AG04450 (cell line): ENCODE measurements at regions of chr7 and their contacts with region 1.

Region 1: DNA sequence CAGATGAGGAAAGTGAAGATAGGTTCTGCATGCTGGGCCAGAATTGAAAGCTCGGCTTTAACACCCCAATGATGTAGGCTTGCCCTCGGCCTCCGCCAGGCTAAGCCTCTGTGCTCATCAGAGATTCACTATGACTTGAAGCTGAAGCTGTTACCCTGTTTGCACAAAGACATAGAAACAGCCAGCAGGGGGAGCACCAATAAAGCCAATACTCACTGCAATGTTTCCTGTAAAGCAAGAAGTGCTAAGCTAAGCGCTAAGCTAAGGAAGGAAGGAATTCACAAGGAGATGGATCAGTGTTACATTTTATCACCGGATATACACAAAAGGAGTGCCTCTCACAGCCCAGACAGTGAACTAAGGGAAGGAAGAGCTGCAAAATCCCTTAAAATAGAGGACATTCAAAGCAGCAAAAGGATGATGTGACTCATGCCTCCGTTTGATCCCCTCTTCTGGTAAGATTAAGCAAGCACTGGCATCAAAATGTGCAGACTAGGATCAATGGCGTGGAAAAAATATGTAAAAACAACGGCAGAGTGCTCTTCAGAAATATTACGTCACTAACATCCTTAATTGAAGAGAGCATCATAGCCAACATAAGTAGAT is 153.8 kb downstream of the COBL start:
- DNase-seq: peak; percentile 26
- H3K4me3 ChIP-seq: no peak overlapping the region
- H3K27ac ChIP-seq: no peak overlapping the region
- H3K27me3 ChIP-seq: peaks cover 6% of the 10 kb centered on the region
- CTCF ChIP-seq: peak; percentile 93

Region 2: DNA sequence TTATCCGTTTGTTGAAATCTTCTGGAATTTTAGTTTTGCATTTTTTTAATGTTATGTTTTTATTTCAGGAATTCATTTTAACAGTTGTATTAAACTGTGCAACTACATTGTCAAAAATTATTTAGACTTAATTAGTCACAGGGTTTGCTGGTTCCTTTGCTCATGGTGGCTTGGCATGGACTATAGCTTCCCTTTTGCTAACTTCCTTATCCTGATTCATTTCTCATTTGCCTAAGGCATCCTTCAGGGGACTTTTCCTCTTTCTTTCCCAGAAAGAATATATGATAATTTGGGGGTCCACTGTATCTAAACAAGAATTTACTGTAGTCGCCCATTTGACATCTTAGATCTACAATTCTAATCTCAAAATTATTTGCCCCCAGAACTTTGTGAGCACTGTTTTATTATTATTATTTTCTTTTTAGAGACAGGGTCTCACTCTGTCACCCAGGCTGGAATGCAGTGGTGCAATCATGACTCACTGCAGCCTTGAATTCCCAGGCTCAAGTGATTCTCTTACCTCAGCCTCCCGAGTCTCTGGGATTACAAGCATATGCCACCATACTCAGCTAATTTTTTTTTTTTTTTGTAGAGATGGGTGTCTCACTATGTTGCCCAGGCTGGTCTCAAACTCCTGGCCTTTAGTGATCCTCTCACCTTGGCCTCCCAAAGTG is 726.6 kb before region 1 on chr7:
- CTCF ChIA-PET with region 1: interaction called, 12 read pairs
- POLR2A ChIA-PET with region 1: no interaction called
- DNase-seq: peak; percentile 27
- H3K4me3 ChIP-seq: no peak overlapping the region
- H3K27ac ChIP-seq: no peak overlapping the region
- H3K27me3 ChIP-seq: no peaks in the 10 kb centered on the region
- CTCF ChIP-seq: no peak

Region 3: GRCh38 chr7:50679218-50680007 is 483.4 kb before region 1 on chr7:
- CTCF ChIA-PET with region 1: interaction called, 12 read pairs
- POLR2A ChIA-PET with region 1: no interaction called
- DNase-seq: no peak
- H3K4me3 ChIP-seq: no peak overlapping the region
- H3K27ac ChIP-seq: no peak overlapping the region
- H3K27me3 ChIP-seq: no peaks in the 10 kb centered on the region
- CTCF ChIP-seq: peak; percentile 40

Region 4: DNA sequence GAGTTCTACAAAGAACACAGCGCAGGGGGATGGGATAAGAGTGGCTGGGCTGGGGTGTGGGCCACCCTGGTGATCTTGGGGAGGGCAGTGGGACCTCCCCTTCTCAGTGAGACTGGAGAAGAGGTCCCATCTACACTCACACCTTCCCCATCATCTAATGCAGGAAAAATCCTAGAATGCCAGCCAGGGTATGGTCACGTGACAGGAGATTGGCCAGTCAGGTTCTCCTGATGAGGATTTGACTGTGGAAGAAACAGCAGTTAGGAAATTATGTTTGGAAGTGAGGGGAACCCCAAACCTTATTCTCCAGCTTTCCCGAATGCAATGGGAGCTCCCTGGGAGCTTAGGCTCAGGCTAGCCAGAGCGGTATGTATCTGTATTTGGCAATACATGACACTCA is 221.3 kb before region 1 on chr7:
- CTCF ChIA-PET with region 1: no interaction called
- POLR2A ChIA-PET with region 1: no interaction called
- DNase-seq: no peak
- H3K4me3 ChIP-seq: no peak overlapping the region
- H3K27ac ChIP-seq: no peak overlapping the region
- H3K27me3 ChIP-seq: peaks cover 2% of the 10 kb centered on the region
- CTCF ChIP-seq: no peak

Region 5: DNA sequence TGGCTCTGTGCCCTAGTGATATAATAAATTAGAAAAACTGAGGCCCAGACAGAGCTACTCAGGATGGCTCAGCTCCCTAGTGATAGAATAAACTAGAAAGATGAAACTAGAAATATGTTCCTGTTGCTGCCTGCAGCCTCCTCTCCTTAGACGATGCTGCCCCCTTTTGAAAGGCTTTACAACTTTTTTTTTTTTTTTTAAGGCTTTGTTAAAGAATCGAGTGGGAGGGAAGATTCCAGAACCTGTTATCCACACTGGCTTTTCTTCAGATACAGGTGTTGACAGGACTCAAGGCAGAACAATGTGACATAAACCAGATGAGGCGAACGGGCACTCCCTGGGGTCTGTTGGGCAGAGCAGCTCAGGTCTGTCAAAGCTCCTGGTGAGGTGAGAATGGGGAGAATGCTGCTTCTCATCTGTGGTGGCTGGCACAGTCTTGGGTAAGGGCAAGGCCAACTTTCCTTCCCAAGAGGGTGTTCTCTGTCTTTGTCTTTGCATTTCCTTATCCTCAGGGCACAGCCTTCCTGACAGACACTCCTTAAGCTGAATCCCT is 21.3 kb before region 1 on chr7:
- CTCF ChIA-PET with region 1: interaction called, 61 read pairs
- POLR2A ChIA-PET with region 1: no interaction called
- DNase-seq: peak; percentile 1
- H3K4me3 ChIP-seq: no peak overlapping the region
- H3K27ac ChIP-seq: no peak overlapping the region
- H3K27me3 ChIP-seq: peaks cover 2% of the 10 kb centered on the region
- CTCF ChIP-seq: peak; percentile 74

Region 6: DNA sequence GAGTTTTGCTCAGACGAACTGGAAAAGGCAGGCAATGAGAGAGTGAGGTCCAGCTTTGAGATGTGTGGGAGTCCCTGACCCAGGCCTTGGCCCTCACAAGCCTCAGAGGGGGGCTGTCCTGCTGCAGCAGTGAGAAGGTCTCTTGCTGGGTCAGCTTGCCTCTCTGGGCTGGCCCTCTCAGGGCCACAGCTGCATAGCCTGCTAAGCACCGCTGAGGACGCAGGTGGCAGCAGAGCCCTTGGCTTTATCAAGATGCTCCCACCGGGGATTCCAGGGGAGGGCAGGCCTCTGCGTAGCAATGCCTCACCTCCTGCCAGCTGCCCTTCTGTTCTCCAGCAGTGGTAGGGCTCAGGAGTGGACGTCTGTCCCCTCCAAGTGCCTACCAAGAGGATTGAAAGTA is 25.1 kb after region 1 on chr7:
- CTCF ChIA-PET with region 1: interaction called, 32 read pairs
- POLR2A ChIA-PET with region 1: no interaction called
- DNase-seq: no peak
- H3K4me3 ChIP-seq: no peak overlapping the region
- H3K27ac ChIP-seq: no peak overlapping the region
- H3K27me3 ChIP-seq: no peaks in the 10 kb centered on the region
- CTCF ChIP-seq: no peak

Region 7: GRCh38 chr7:51246258-51247245 is 83.7 kb after region 1 on chr7:
- CTCF ChIA-PET with region 1: no interaction called
- POLR2A ChIA-PET with region 1: no interaction called
- DNase-seq: no peak
- H3K4me3 ChIP-seq: no peak overlapping the region
- H3K27ac ChIP-seq: no peak overlapping the region
- H3K27me3 ChIP-seq: no peaks in the 10 kb centered on the region
- CTCF ChIP-seq: no peak

Region 8: DNA sequence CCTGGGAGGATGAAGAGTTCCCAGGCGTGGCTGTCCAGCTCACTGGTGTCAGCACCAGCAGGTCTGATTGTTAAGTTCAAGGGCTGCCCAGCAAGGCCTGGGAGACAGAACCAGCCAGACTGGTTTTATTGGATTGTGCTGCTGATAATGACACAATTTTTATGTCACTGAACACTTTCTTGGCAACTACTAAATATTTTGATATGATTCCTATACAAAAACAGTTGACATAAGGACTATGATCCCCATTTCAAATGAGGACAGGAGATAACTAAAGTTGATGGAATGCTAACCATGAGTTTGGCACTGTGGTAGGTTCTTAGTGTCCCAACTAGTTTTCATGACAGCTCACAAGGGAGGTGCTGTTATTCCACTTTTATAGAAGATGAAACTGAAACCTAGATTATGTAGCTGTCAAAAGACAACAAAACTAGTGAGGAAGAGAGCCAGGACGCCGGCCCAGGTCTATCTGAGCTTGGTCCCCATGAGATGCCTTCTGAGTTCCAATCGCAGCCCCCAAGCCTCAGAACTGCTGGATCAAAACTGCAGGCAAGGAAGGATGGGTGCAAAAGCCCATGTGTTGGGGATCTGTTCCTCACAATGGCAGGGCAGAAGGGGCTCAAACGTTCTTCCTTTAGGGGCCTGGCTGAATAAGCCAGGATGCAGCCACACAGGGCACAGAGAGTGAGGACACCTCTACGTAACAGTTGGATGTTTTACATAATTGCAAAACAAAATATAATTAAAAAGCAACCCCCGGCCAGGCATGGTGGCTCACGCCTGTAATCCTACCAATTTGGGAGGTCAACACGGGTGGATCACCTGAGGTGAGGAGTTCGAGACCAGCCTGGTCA is 101.0 kb after region 1 on chr7:
- CTCF ChIA-PET with region 1: no interaction called
- POLR2A ChIA-PET with region 1: no interaction called
- DNase-seq: no peak
- H3K4me3 ChIP-seq: no peak overlapping the region
- H3K27ac ChIP-seq: no peak overlapping the region
- H3K27me3 ChIP-seq: no peaks in the 10 kb centered on the region
- CTCF ChIP-seq: no peak